T-cell (primary cell): ENCODE measurements at regions of chr1 and their contacts with region 1.

Region 1: GRCh38 chr1:19596714-19597495 is 47.2 kb upstream of the NBL1 start:
- DNase-seq: peak; percentile 87 to 99 (median 96)
- ATAC-seq: peak; percentile 75 to 88 (median 86)
- H3K4me3 ChIP-seq: peak overlapping the region; percentile 89 to 93
- H3K4me3 Mint-ChIP-seq: peak overlapping the region; percentile 95 to 100 (median 100)
- H3K27ac ChIP-seq: peak overlapping the region; percentile 100
- H3K27ac Mint-ChIP-seq: peak overlapping the region; percentile 99 to 100
- H3K4me1 ChIP-seq: peaks cover 35 to 51% of the 10 kb centered on the region in 2 experiments
- H3K4me1 Mint-ChIP-seq: peaks cover 51 to 56% (median 52%) of the 10 kb centered on the region in 3 donors
- H3K27me3 ChIP-seq: no peaks in the 10 kb centered on the region
- H3K27me3 Mint-ChIP-seq: no peaks in the 10 kb centered on the region

Region 2: GRCh38 chr1:19437891-19438294 is 159.0 kb before region 1 on chr1:
- CTCF ChIA-PET with region 1: no interaction called
- POLR2A ChIA-PET with region 1: interaction called, 3 to 12 read pairs
- DNase-seq: no peak
- ATAC-seq: no peak
- H3K4me3 ChIP-seq: no peak overlapping the region
- H3K4me3 Mint-ChIP-seq: peak overlapping the region in 1 of 3 donors; percentile 55
- H3K27ac ChIP-seq: peak overlapping the region; percentile 50
- H3K27ac Mint-ChIP-seq: peak overlapping the region; percentile 28 to 85
- H3K4me1 ChIP-seq: peaks cover 10 to 89% of the 10 kb centered on the region in 2 experiments
- H3K4me1 Mint-ChIP-seq: peaks cover 92 to 95% (median 94%) of the 10 kb centered on the region in 3 donors
- H3K27me3 ChIP-seq: no peaks in the 10 kb centered on the region
- H3K27me3 Mint-ChIP-seq: no peaks in the 10 kb centered on the region

Region 3: DNA sequence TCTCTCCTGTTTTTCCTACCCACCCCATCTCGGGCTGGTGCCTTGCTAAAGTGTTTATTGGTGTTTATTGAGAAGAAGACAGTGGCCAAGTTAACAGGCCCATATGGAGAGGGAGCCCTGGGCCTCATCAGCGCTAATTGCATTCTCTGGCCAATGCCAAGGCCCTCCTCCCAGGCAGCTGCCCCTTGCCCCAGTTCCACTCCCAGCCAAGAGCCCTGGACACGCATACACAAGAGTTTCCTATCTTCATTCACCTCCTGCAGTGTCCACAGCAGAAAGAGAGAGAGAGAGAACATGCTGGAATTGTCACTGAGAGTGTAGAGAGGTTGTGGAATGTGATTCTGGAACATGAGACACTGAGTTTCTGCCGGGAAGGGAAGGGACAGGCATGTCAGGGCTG is 668.3 kb after region 1 on chr1:
- CTCF ChIA-PET with region 1: no interaction called
- POLR2A ChIA-PET with region 1: no interaction called
- DNase-seq: no peak
- ATAC-seq: no peak
- H3K4me3 ChIP-seq: no peak overlapping the region
- H3K4me3 Mint-ChIP-seq: no peak overlapping the region
- H3K27ac ChIP-seq: no peak overlapping the region
- H3K27ac Mint-ChIP-seq: no peak overlapping the region
- H3K4me1 ChIP-seq: no peaks in the 10 kb centered on the region
- H3K4me1 Mint-ChIP-seq: no peaks in the 10 kb centered on the region
- H3K27me3 ChIP-seq: peaks cover 0 to 8% of the 10 kb centered on the region in 2 experiments
- H3K27me3 Mint-ChIP-seq: peaks cover 13 to 20% of the 10 kb centered on the region in 2 donors